ENCODE measurements at regions of chr13 and their contacts with region 1.

Region 1: GRCh38 chr13:99269627-99270241 is 11.6 kb upstream of the GPR18 start:
- DNase-seq: peak; percentile 84
- H3K4me3 ChIP-seq: no peak overlapping the region
- H3K27ac ChIP-seq: no peak overlapping the region
- H3K4me1 ChIP-seq: peaks cover 1% of the 10 kb centered on the region
- H3K27me3 ChIP-seq: no peaks in the 10 kb centered on the region

Region 2: DNA sequence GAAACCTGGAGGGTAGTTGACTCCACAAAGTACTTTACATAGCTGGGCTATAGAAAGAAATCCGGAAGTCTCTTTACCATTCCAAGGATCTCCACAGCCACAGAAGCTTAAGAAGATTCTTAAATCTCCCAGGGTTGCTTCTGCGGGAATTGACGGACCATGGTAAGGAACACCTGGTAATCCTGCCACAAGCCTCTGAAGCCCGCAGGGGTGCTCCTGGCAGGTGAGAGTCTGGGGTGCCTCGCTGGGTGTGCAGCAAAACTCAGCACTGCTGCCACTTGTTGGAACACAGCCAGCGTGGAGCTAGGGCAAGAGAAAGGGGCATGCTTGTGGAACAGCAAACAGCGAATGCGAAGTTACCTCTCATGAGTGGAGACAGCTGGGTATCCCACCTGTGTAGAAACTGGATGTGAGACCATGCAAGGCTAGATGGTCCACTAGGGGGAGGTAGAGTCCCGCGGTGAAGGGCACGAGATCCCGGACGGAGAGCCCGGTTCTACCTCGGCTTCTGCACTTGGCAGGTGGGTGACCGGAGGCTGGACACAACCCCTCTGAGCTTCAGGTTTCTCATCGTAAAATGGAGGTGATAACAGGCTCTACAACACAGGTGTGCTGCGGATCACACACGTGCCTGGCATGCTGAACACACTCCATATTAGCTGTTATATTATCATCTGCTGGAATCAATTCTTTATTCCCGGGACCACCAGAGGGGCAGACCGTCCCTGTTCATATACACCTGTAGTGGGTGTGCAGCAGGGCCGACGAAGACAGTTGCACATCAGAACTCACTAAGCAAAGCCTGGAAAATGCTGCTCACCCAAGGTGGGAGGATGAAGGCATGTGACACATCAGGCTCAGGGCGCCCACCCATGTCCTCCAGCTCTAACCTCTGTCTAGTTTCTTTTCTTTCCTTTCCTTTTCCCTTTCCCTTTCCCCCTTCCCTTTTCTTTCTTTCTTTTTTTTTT is 93.1 kb before region 1 on chr13:
- in situ Hi-C with region 1: loop called (anchors 10 kb)
- DNase-seq: peak; percentile 62
- H3K4me3 ChIP-seq: no peak overlapping the region
- H3K27ac ChIP-seq: no peak overlapping the region
- H3K4me1 ChIP-seq: no peaks in the 10 kb centered on the region
- H3K27me3 ChIP-seq: peaks cover 8% of the 10 kb centered on the region; the same call in 1 of the 2 replicates

Region 3: DNA sequence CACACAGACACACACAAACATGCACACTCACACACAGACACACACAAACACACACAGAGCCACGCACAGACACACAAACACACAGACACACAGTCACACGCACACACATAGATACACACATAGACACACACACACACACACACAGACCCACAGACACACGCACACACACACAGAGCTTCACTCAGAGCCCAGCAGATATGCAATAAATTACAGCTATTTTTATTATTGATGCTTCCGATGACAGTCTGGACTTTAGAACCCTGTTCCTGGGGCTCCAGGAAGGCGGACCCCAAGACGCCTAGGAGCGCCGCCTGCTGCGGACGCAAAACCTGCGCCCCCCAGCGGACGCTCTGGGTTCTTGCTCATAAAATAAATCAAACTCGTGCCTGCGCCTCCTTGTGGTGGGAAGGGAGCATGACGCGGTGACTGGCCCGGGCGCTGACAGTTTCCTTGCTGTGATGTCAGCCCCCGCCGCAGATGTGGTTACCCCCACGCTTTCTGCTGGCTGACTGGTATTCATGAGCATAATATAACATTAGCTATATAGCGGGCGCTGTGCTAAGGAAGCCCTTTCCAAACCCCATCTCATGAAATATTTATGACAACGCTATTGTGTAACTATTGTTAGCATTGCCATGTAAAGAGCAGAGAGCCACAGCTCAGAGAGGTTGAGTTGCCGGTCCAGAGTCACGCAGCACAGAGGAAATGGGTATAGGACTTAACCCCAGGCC is 167.1 kb after region 1 on chr13:
- in situ Hi-C with region 1: loop called (anchors 5 kb)
- DNase-seq: peak; percentile 93
- H3K4me3 ChIP-seq: peak overlapping the region; percentile 50
- H3K27ac ChIP-seq: no peak overlapping the region
- H3K4me1 ChIP-seq: peaks cover 13% of the 10 kb centered on the region
- H3K27me3 ChIP-seq: peaks cover 23% of the 10 kb centered on the region; the same call in 1 of the 2 replicates

Region 4: DNA sequence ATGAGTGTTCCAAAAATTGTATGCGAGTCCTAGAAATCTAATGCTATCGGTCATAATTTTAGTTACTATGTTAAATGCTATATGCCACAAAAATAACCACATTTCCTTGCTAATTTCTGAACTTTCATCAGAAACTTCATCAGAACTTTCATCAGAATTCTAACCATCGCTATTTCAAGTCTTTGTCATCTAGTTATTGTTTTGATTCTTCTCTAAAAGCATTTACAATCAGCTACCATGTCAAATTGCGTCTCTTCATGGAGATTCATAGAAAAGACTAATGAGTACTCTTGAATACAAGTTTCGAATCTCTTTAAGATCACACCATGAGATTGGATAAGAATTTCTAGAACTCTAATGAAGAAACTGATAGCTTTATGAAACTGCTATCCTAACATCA is 178.8 kb after region 1 on chr13:
- in situ Hi-C with region 1: no loop called
- DNase-seq: no peak
- H3K4me3 ChIP-seq: no peak overlapping the region
- H3K27ac ChIP-seq: no peak overlapping the region
- H3K4me1 ChIP-seq: peaks cover 8% of the 10 kb centered on the region; the same call in 1 of the 2 replicates
- H3K27me3 ChIP-seq: no peaks in the 10 kb centered on the region

Region 5: GRCh38 chr13:99749271-99750019 is 479.7 kb after region 1 on chr13:
- in situ Hi-C with region 1: no loop called
- DNase-seq: no peak
- H3K4me3 ChIP-seq: no peak overlapping the region
- H3K27ac ChIP-seq: no peak overlapping the region
- H3K4me1 ChIP-seq: no peaks in the 10 kb centered on the region
- H3K27me3 ChIP-seq: no peaks in the 10 kb centered on the region

Measured in GM23248 (cell line).